Common myeloid progenitor, CD34-positive (primary cell): ENCODE measurements at regions of chr10 and their contacts with region 1.

Region 1: GRCh38 chr10:80493522-80494051 is 39.5 kb downstream of the TSPAN14 start:
- DNase-seq: peak; percentile 28 to 75 (median 62)
- H3K4me3 ChIP-seq: peak overlapping the region in 2 of 7 experiments; percentile 10 to 21
- H3K27ac ChIP-seq: peak overlapping the region in 1 of 2 experiments; percentile 55
- H3K4me1 ChIP-seq: peaks cover 25 to 68% (median 48%) of the 10 kb centered on the region in 4 experiments
- H3K27me3 ChIP-seq: no peaks in the 10 kb centered on the region

Region 2: DNA sequence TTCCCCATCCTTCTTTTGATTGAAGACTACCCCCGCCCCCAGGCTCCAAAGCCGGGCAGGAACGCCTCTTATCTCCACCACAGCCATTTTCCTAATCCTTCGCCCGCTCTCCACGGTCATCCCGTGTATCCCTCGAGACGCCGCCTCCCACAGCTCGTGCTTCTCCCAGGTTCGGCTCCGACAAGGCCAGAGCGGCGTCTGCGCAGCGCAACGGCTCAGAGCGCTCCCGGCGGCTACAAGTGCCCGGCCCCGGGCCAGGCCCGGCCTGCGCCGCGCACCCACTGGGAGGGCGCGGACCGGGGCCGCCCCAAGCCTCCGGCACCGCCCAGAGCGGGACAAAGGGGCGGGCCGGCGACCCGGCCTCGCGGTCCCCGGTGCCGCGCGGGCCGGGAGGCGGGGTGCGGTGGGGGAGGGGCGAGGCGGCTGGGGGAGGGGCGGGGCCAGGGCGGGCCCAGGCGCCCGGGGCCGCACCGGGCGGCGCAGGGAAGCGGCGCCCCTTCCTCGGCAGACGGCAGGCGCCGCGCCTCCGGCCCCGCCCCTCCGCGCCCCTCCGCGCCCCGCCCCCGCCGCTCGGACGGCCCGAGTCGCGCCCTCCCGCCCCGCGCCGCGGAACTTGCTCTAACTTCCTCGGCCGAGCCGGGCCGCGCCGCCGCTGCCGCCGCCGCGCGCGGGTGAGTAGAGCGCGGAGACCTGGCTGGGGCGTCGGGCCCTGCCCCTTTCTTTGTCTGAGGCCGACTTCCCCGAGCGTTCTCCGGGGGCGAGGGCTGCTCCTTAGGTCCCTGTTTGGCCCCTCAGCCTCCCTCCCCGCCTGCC is 39.7 kb before region 1 on chr10 and contains the start of gene TSPAN14:
- CTCF ChIA-PET with region 1: interaction called, 571 read pairs
- POLR2A ChIA-PET with region 1: no interaction called
- DNase-seq: peak; percentile 64 to 84 (median 75)
- H3K4me3 ChIP-seq: peak within 1 kb of the TSS; percentile 62 to 87 (median 78)
- H3K27ac ChIP-seq: peak within 1 kb of the TSS in 1 of 2 experiments; percentile 78
- H3K4me1 ChIP-seq: peaks cover 10 to 39% (median 38%) of the 10 kb centered on the region in 4 experiments
- H3K27me3 ChIP-seq: no peaks in the 10 kb centered on the region